Endothelial cell of umbilical vein (primary cell): ENCODE measurements at regions of chr1 and their contacts with region 1.

Region 1: GRCh38 chr1:2545759-2546514 is 10.2 kb upstream of the TNFRSF14 start:
- DNase-seq: peak; percentile 84
- H3K4me3 ChIP-seq: peak overlapping the region; percentile 51 to 74 (median 67)
- H3K27ac ChIP-seq: peak overlapping the region; percentile 80
- H3K4me1 ChIP-seq: peaks cover 27% of the 10 kb centered on the region
- H3K27me3 ChIP-seq: peaks cover 0 to 1% of the 10 kb centered on the region in 2 experiments
- CTCF ChIP-seq: no peak
- POLR2A ChIP-seq: peak; percentile 78

Region 2: DNA sequence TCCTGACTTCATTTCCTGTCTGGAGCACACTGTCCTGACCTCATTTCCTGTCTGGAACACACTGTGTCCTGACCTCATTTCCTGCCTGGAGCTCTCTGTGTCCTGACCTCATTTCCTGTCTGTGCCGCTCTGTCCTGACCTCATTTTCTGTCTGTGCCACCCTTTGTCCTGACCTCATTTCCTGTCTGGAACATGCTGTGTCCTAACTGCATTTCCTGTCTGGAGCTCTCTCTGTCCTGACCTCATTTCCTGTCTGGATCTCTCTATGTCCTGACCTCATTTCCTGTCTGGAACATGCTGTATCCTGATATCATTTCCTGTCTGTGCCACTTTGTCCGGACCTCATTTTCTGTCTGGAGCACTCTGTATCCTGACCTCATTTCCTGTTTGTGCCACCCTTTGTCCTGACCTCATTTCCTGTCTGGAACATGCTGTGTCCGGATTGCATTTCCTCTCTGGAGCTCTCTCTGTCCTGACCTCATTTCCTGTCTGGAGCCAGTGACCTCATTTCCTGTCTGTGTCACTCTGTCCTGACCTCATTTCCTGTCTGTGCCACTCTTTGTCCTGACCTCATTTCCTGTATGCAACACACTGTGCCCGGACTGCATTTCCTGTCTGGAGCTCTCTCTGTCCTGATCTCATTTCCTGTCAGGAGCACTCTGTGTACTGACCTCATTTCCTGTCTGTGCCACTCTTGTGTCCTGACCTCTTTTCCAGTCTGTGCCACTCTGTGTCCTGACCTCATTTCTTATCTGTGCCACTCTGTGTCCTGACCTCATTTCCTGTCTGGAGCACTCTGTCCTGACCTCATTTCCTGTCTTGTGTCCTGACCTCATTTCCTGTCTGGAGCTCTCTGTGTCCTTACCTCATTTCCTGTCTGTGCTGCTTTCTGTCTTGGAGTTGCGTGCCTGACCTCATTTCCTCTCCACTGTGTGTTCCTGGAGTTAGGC is 290.2 kb before region 1 on chr1:
- CTCF ChIA-PET with region 1: no interaction called
- POLR2A ChIA-PET with region 1: no interaction called
- dilution Hi-C with region 1: no loop called
- intact Hi-C with region 1: no loop called
- DNase-seq: peak; percentile 69
- H3K4me3 ChIP-seq: no peak overlapping the region
- H3K27ac ChIP-seq: peak overlapping the region; percentile 84
- H3K4me1 ChIP-seq: peaks cover 9% of the 10 kb centered on the region
- H3K27me3 ChIP-seq: no peaks in the 10 kb centered on the region
- CTCF ChIP-seq: no peak
- POLR2A ChIP-seq: no peak

Region 3: DNA sequence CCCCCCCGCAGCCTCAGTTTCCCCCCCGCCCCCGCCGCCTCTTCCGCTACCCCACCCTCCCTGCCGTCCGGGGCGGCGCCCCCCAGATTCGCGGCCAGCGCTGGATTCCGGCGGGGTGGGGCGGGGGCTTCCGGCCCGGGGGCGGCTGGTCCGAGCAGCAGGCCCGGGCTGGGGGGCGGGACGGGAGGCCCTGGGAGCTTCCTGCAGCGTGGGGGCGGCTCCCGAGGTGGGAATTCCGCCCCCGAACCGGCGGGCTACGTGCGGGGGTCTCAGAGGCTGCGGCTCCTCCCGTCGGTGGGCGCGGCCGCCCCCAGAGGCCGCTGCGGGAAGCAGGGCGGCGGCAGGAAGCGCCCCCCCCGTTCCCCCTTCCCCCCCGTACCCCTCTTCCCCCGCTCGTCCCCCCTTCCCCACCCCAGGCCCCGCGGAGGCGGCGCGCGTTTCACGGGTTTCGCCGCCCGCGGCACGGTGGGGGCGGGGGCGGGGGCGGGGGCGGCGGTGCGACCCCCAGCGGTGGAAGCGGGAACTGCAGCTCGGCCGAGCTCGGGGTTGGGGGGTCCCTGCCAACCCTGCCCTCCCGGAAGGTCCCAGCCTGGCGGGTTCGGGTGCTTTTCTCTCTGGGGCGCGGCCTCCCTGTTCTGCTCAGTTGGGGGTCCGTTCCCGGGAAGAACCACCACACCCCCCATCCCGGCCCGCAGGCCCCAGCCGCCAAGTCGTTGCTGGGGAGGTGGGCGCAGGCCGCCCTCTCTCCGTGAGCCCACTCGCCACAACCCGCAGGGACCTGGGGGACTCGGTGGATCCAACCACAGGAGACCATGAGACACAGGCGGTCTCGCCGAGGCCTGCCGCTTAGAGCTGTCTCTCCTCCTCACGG is 230.9 kb before region 1 on chr1:
- CTCF ChIA-PET with region 1: no interaction called
- POLR2A ChIA-PET with region 1: no interaction called
- dilution Hi-C with region 1: no loop called
- intact Hi-C with region 1: no loop called
- DNase-seq: peak; percentile 29
- H3K4me3 ChIP-seq: peak overlapping the region in 1 of 3 experiments; percentile 54
- H3K27ac ChIP-seq: no peak overlapping the region
- H3K4me1 ChIP-seq: peaks cover 7% of the 10 kb centered on the region
- H3K27me3 ChIP-seq: no peaks in the 10 kb centered on the region
- CTCF ChIP-seq: peak; percentile 44 to 72
- POLR2A ChIP-seq: no peak

Region 4: DNA sequence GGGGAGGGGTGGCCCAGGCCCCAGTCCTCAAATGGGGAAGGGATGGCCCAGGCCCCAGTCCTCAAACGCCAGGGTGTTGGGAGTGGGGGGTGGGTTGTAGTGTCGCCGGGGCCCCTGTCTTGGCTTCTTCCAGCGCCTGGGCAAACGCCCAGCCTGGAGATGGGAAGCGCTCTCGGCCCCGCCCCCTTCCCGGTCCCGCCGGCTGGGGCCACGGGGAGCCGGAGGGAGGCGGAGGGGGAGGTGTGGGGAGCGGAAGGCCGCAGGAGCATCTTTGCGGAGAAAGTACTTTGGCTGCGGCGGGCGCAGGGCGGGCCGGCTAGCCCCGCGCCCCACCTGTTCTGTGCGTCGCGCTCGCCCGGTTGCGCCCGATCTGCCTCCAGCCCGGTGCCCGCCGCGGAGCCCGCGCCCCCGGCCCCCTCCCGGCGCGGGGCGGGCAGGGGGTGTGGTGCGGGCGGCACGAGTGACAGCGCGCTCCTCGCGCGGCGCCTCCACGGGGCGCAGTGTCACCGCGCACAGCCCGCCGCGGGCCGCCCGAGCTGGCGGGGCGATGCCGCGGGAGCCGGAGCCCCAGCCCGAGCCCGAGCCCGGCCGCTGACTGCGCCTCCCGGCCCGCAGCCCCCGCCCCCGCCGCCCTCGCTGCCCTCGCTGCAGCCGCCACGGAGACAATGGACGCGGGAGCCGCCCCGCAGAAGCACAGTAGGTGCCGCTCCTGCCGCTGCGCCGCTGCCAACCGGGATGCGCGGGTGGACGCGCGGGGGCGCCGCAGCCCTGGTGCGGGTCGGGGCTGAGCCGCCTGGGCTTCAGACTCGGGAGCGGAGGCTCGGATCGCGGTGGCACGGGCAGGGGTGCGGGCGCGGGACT is 102.4 kb before region 1 on chr1:
- CTCF ChIA-PET with region 1: interaction called, 4 read pairs
- POLR2A ChIA-PET with region 1: no interaction called
- dilution Hi-C with region 1: no loop called
- intact Hi-C with region 1: loop called (anchors 2 kb)
- DNase-seq: no peak
- H3K4me3 ChIP-seq: no peak overlapping the region
- H3K27ac ChIP-seq: no peak overlapping the region
- H3K4me1 ChIP-seq: peaks cover 10% of the 10 kb centered on the region
- H3K27me3 ChIP-seq: peaks cover 6 to 13% of the 10 kb centered on the region in 2 experiments
- CTCF ChIP-seq: peak; percentile 10 to 26
- POLR2A ChIP-seq: no peak

Region 5: GRCh38 chr1:2496087-2496622 is 49.8 kb before region 1 on chr1:
- CTCF ChIA-PET with region 1: no interaction called
- POLR2A ChIA-PET with region 1: no interaction called
- dilution Hi-C with region 1: no loop called
- intact Hi-C with region 1: no loop called
- DNase-seq: no peak
- H3K4me3 ChIP-seq: no peak overlapping the region
- H3K27ac ChIP-seq: no peak overlapping the region
- H3K4me1 ChIP-seq: no peaks in the 10 kb centered on the region
- H3K27me3 ChIP-seq: no peaks in the 10 kb centered on the region
- CTCF ChIP-seq: no peak
- POLR2A ChIP-seq: no peak

Region 6: GRCh38 chr1:2525920-2526823 is 19.8 kb before region 1 on chr1 and contains the start of gene PANK4:
- CTCF ChIA-PET with region 1: interaction called, 13 read pairs
- POLR2A ChIA-PET with region 1: interaction called, 5 read pairs
- dilution Hi-C with region 1: no loop called
- intact Hi-C with region 1: loop called (anchors 1 kb)
- DNase-seq: peak; percentile 84
- H3K4me3 ChIP-seq: peak within 1 kb of the TSS; percentile 75 to 97 (median 91)
- H3K27ac ChIP-seq: peak within 1 kb of the TSS; percentile 58
- H3K4me1 ChIP-seq: peaks cover 17% of the 10 kb centered on the region
- H3K27me3 ChIP-seq: peaks cover 10 to 17% of the 10 kb centered on the region in 2 experiments
- CTCF ChIP-seq: no peak
- POLR2A ChIP-seq: peak; percentile 82
- total RNA-seq, gene PANK4: 34.0 and 34.7 TPM in 2 replicates

Region 7: GRCh38 chr1:2586154-2587070 is 40.5 kb after region 1 on chr1 and contains the start of gene PRXL2B:
- CTCF ChIA-PET with region 1: interaction called, 4 read pairs
- POLR2A ChIA-PET with region 1: no interaction called
- dilution Hi-C with region 1: no loop called
- intact Hi-C with region 1: loop called (anchors 1 kb)
- DNase-seq: peak; percentile 98
- H3K4me3 ChIP-seq: peak within 1 kb of the TSS; percentile 56 to 73 (median 61)
- H3K27ac ChIP-seq: peak within 1 kb of the TSS; percentile 75
- H3K4me1 ChIP-seq: peaks cover 15% of the 10 kb centered on the region
- H3K27me3 ChIP-seq: no peaks in the 10 kb centered on the region
- CTCF ChIP-seq: no peak
- POLR2A ChIP-seq: peak; percentile 33
- total RNA-seq, gene PRXL2B: 55.8 and 56.8 TPM in 2 replicates